Aorta (tissue), 5 donors: ENCODE measurements at regions of chr11 and their contacts with region 1.

Region 1: DNA sequence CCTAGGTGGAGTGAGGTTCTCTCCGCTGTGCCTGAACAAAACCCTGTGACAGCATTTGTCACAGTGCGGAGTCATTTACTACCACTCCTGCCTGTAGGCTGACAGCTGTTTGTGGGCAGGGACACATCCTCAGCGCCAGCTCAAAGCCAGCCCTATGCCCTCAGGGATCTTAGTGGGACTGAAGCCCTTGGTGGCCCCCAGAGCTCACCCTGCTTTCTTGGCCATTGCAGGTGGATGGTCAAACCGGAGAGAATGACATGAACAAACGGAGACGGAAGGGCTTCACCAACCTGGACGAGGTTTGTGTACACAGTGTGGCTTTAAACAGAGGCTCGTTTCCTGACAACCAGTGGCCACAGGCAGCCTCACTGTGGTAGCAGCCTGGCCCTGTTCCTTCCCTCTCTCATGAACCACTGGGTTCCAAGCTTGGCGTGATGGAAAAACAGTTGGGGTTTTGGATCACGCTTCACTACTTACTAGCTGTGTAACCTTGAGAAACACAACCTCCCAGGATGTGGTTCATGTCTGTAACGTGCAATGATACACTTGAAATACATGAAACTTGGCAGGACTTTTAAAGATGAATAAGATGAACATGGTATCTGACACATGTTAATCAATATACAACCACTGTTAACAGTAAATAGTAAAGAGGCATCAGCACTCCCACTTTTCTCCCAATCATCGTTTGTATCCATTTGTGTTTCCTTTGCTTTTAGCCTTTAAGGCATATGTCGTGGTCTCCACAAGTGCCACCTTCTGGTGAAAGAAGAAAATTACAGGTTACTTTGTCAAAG is 125.8 kb downstream of the MICAL2 start:
- DNase-seq: peak in 1 of 2 donors; percentile 68
- ATAC-seq: peak; percentile 53
- H3K4me3 ChIP-seq: no peak overlapping the region
- H3K27ac ChIP-seq: peak overlapping the region; percentile 98 to 99
- H3K4me1 ChIP-seq: peaks cover 3 to 7% of the 10 kb centered on the region in 2 donors
- H3K27me3 ChIP-seq: no peaks in the 10 kb centered on the region

Region 2: DNA sequence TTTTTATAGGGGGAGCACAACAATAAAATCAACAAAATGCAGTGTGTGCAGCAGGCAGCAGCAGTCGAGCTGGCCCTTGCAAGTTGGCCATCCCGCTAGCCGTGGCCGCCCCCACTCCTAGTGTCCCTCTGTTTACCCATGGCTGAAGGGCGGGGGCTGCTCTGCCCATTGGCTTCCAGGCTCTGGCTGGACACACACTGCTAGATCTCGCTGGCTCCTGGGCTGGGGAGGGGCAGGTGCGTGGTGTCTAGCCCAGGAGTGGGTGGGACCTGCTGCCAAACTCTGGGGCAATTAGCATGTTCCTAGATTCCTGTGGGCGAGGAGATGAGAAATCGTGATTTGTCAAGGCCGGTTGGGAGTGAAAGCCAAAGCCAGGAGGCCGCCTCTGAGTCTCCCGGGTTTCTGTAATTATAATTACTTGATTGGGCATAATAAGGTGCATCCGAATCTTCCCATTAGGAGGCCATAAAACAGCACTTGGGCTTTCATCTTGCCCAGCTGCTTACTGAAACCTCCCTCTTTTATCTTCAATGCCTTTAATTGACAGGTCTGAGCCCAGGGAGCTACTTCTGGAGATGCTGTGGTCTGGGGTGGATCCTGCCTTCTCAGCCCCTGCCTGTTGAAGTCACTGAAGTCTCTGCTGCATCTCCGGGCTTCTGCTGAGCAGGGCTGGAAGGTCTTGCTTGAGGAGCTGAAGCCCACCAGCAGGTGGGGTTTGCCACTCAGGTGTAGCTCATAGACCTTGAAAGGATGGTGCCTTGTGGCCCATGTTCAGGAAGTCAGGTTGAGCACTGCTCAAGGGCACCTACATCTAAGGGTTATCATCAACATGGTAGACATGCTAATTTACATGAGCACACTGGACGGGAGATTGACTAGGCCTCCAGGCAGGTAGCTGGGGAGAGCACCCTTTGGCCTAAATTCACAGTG is 183.2 kb before region 1 on chr11:
- intact Hi-C with region 1: loop called in 1 of 2 experiments (anchors 5 kb)
- DNase-seq: peak in 1 of 2 donors; percentile 54
- ATAC-seq: no peak
- H3K4me3 ChIP-seq: no peak overlapping the region
- H3K27ac ChIP-seq: no peak overlapping the region
- H3K4me1 ChIP-seq: peaks cover 0 to 3% of the 10 kb centered on the region in 2 donors
- H3K27me3 ChIP-seq: no peaks in the 10 kb centered on the region

Region 3: GRCh38 chr11:12110201-12110713 is 125.9 kb before region 1 on chr11 and contains the start of gene MICAL2:
- intact Hi-C with region 1: loop called (anchors 5 to 10 kb)
- DNase-seq: peak; percentile 94 to 96
- ATAC-seq: peak; percentile 95
- H3K4me3 ChIP-seq: peak within 1 kb of the TSS; percentile 63 to 69
- H3K27ac ChIP-seq: peak within 1 kb of the TSS; percentile 83 to 90
- H3K4me1 ChIP-seq: peaks cover 2 to 5% of the 10 kb centered on the region in 2 donors
- H3K27me3 ChIP-seq: no peaks in the 10 kb centered on the region
- total RNA-seq, gene MICAL2: 315 to 605 TPM